Activated naive CD4-positive, alpha-beta T cell treated with anti-CD3 and anti-CD28 coated beads for 36 hours (primary cell): ENCODE measurements at regions of chr12 and their contacts with region 1.

Region 1: DNA sequence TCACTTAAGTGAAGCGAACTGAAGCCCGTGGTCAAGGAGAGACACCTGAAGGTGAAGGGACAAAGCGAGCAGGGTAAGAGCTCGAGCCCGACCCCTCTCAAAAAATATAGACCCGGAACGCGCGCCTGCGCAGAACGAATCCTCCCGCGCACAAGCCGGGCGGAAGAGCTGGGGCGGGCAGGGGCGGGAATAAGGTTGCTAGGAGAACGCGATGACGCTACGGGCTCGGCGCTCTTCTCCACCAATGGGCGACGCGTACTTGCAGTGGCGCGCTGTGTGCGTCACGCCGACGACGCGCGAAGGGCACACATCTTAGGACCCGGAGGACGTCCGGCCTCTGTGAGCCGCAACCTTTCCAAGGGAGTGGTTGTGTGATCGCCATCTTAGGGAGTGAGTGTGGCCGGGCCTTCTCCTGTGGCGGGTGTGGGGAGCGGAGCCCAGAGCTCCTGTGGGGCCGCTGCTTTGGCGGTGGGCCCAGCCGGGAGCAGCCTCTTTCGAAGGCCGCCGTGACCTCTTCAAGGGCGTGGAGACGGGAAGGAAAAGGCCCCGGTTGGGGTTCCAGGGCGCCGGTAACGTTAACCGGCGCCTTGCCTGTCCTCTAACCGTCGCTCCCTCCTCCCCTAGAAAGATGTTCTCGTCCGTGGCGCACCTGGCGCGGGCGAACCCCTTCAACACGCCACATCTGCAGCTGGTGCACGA is at the start of gene SLC25A3:
- DNase-seq: peak; percentile 94
- H3K4me3 Mint-ChIP-seq: peak within 1 kb of the TSS; percentile 93
- H3K27ac Mint-ChIP-seq: peak within 1 kb of the TSS; percentile 96
- H3K4me1 Mint-ChIP-seq: peaks cover 22% of the 10 kb centered on the region
- H3K27me3 Mint-ChIP-seq: no peaks in the 10 kb centered on the region
- total RNA-seq, gene SLC25A3: 714 to 732 TPM

Region 2: GRCh38 chr12:96906849-96907670 is 1686.4 kb before region 1 on chr12 and contains the start of gene NEDD1:
- CTCF ChIA-PET with region 1: no interaction called
- intact Hi-C with region 1: loop called (anchors 1 kb)
- DNase-seq: peak; percentile 82
- H3K4me3 Mint-ChIP-seq: peak within 1 kb of the TSS; percentile 97
- H3K27ac Mint-ChIP-seq: peak within 1 kb of the TSS; percentile 95
- H3K4me1 Mint-ChIP-seq: peaks cover 41% of the 10 kb centered on the region
- H3K27me3 Mint-ChIP-seq: no peaks in the 10 kb centered on the region
- total RNA-seq, gene NEDD1: 61.8 to 63.8 TPM

Region 3: DNA sequence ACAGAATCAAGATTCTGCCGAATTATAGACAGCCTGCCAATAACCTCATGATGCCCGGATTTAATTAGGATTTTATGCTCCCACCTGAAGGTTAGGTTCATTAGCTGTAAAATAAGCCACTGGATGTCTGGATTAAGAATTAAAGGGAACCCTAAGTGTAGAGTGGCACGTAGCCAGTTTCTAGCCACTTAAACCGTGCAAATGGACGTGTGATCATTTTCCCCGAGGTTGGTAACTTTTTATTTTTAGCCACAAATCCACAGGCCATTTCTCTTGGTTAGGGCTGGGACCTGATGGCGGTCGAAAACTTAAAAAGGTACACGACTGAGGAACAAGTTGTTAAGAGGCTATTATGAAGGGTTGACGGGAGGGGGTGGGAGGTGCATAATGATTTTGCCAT is 205.4 kb before region 1 on chr12:
- CTCF ChIA-PET with region 1: no interaction called
- intact Hi-C with region 1: no loop called
- DNase-seq: no peak
- H3K4me3 Mint-ChIP-seq: no peak overlapping the region
- H3K27ac Mint-ChIP-seq: no peak overlapping the region
- H3K4me1 Mint-ChIP-seq: no peaks in the 10 kb centered on the region
- H3K27me3 Mint-ChIP-seq: peaks cover 5% of the 10 kb centered on the region

Region 4: GRCh38 chr12:98503592-98504367 is 89.7 kb before region 1 on chr12:
- CTCF ChIA-PET with region 1: no interaction called
- intact Hi-C with region 1: loop called (anchors 1 kb)
- DNase-seq: peak; percentile 97
- H3K4me3 Mint-ChIP-seq: peak overlapping the region; percentile 97
- H3K27ac Mint-ChIP-seq: peak overlapping the region; percentile 100
- H3K4me1 Mint-ChIP-seq: peaks cover 16% of the 10 kb centered on the region
- H3K27me3 Mint-ChIP-seq: peaks cover 8% of the 10 kb centered on the region

Region 5: GRCh38 chr12:98572010-98572409 is 21.5 kb before region 1 on chr12:
- CTCF ChIA-PET with region 1: interaction called, 27 read pairs
- intact Hi-C with region 1: loop called (anchors 1 kb)
- DNase-seq: no peak
- H3K4me3 Mint-ChIP-seq: no peak overlapping the region
- H3K27ac Mint-ChIP-seq: no peak overlapping the region
- H3K4me1 Mint-ChIP-seq: no peaks in the 10 kb centered on the region
- H3K27me3 Mint-ChIP-seq: peaks cover 2% of the 10 kb centered on the region

Region 6: DNA sequence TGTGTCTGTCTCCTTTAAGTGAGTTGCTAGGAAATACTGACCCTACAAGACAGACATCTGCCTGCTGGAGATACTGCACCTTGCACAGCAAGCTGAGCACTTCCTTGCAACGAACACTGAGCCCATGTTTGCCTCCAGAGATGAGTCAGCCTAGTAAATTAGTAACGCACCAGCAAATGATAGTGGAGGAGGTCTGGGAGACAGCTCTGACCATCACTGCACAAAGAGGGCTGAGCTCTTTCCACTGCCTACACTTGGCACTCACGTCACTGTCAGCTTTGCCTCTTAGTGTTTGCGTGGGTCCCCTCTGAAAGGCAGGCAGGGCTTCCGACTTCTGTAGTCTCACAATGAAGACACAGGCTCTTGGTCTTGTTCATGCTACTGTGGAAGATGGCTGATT is 160.6 kb after region 1 on chr12:
- CTCF ChIA-PET with region 1: interaction called, 11 read pairs
- intact Hi-C with region 1: no loop called
- DNase-seq: peak; percentile 15
- H3K4me3 Mint-ChIP-seq: no peak overlapping the region
- H3K27ac Mint-ChIP-seq: no peak overlapping the region
- H3K4me1 Mint-ChIP-seq: peaks cover 2% of the 10 kb centered on the region
- H3K27me3 Mint-ChIP-seq: peaks cover 8% of the 10 kb centered on the region

Region 7: DNA sequence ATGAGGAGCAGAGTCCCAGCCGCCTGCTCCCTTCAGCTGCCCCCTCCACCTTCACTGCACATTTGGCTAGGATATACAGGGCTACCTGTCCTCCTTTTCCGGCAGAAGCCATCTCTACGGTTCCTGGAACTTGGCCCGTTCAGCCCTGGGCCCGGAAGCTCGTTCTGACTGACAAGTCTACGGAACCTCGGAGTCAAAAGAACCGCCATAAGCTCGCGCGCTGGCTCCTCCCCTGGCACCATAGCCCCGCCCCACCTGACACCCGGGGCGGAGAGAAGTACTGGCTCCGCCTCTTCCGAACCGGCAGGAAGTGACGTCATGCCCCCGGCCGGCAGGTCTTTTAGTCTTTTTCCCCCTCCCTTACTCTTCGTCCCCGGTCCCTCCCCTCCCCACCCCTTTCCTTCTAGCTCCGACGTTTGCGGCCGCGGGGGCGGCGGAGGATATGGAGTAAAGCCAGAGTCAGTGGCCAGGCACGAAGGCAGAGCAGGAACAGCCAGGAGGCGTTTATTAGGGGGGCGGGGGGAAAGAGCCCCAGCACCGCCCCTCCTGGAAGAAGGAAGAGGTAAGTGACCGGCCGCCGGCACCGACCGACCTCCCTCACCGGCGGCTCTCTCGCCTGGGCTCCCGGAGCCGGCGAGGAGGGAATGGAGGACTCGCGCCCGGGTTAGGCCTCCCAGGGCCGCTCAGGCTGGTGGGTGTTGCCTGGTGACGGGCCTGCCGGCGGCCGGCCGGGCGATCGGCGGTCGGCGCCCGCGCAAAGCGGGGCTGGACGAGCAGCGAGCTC is 1673.5 kb after region 1 on chr12 and contains the starts of genes DEPDC4 and SCYL2:
- CTCF ChIA-PET with region 1: no interaction called
- intact Hi-C with region 1: loop called (anchors 1 kb)
- DNase-seq: peak; percentile 95
- H3K4me3 Mint-ChIP-seq: peak within 1 kb of the TSS; percentile 96
- H3K27ac Mint-ChIP-seq: peak within 1 kb of the TSS; percentile 97
- H3K4me1 Mint-ChIP-seq: peaks cover 28% of the 10 kb centered on the region
- H3K27me3 Mint-ChIP-seq: no peaks in the 10 kb centered on the region
- total RNA-seq, gene DEPDC4: 3.4 to 3.6 TPM
- total RNA-seq, gene SCYL2: 19.4 to 20.7 TPM